ENCODE measurements at regions of chr19 and their contacts with region 1.

Region 1: GRCh38 chr19:51338563-51339312 is 3.2 kb downstream of the VSIG10L start:
- DNase-seq: peak; percentile 74 to 91 (median 86)
- ATAC-seq: peak; percentile 85
- H3K4me3 ChIP-seq: peak overlapping the region; percentile 66 to 71
- H3K4me3 Mint-ChIP-seq: peak overlapping the region; percentile 82
- H3K27ac ChIP-seq: no peak overlapping the region
- H3K27ac Mint-ChIP-seq: no peak overlapping the region
- H3K4me1 ChIP-seq: peaks cover 16% of the 10 kb centered on the region
- H3K4me1 Mint-ChIP-seq: peaks cover 13% of the 10 kb centered on the region
- H3K27me3 ChIP-seq: no peaks in the 10 kb centered on the region
- H3K27me3 Mint-ChIP-seq: peaks cover 4% of the 10 kb centered on the region
- CTCF ChIP-seq: peak; percentile 97

Region 2: DNA sequence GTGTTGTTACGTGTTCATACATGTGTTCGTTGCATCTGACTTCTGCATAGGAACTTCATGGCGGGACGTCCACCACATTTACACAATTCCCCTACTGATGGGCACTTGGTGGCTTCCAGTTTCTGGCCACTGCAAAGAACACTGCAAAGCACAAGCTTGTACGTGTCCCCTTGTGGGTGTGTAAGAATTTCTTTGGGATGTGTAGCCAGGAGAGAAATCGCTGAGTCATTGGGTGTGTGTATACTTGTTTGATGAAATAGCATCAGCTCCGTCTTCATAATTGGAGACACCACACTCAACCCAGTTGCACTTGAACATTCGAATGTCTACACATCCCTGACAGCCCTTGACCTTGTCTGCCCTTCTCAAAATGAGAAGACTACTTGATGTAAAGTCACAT is 405.1 kb before region 1 on chr19:
- CTCF ChIA-PET with region 1: no interaction called
- POLR2A ChIA-PET with region 1: no interaction called
- intact Hi-C with region 1: no loop called
- DNase-seq: no peak
- ATAC-seq: no peak
- H3K4me3 ChIP-seq: no peak overlapping the region
- H3K4me3 Mint-ChIP-seq: no peak overlapping the region
- H3K27ac ChIP-seq: no peak overlapping the region
- H3K27ac Mint-ChIP-seq: no peak overlapping the region
- H3K4me1 ChIP-seq: no peaks in the 10 kb centered on the region
- H3K4me1 Mint-ChIP-seq: peaks cover 2% of the 10 kb centered on the region
- H3K27me3 ChIP-seq: no peaks in the 10 kb centered on the region
- H3K27me3 Mint-ChIP-seq: peaks cover 33% of the 10 kb centered on the region
- CTCF ChIP-seq: no peak

Region 3: GRCh38 chr19:51393959-51394836 is 55.5 kb after region 1 on chr19:
- CTCF ChIA-PET with region 1: interaction called, 4 read pairs
- POLR2A ChIA-PET with region 1: no interaction called
- intact Hi-C with region 1: loop called (anchors 1 kb)
- DNase-seq: peak; percentile 69 to 97 (median 85)
- ATAC-seq: peak; percentile 88
- H3K4me3 ChIP-seq: peak overlapping the region; percentile 45 to 51
- H3K4me3 Mint-ChIP-seq: peak overlapping the region; percentile 84
- H3K27ac ChIP-seq: peak overlapping the region; percentile 31 to 74
- H3K27ac Mint-ChIP-seq: peak overlapping the region; percentile 84
- H3K4me1 ChIP-seq: peaks cover 22% of the 10 kb centered on the region
- H3K4me1 Mint-ChIP-seq: peaks cover 30% of the 10 kb centered on the region
- H3K27me3 ChIP-seq: no peaks in the 10 kb centered on the region
- H3K27me3 Mint-ChIP-seq: no peaks in the 10 kb centered on the region
- CTCF ChIP-seq: no peak

Region 4: GRCh38 chr19:51441410-51442390 is 103.0 kb after region 1 on chr19:
- CTCF ChIA-PET with region 1: interaction called, 14 read pairs
- POLR2A ChIA-PET with region 1: no interaction called
- intact Hi-C with region 1: loop called (anchors 1 kb)
- DNase-seq: peak; percentile 56 to 95 (median 81)
- ATAC-seq: peak; percentile 91
- H3K4me3 ChIP-seq: peak overlapping the region; percentile 21 to 32
- H3K4me3 Mint-ChIP-seq: peak overlapping the region; percentile 75
- H3K27ac ChIP-seq: peak overlapping the region; percentile 24 to 83
- H3K27ac Mint-ChIP-seq: peak overlapping the region; percentile 93
- H3K4me1 ChIP-seq: peaks cover 31% of the 10 kb centered on the region
- H3K4me1 Mint-ChIP-seq: peaks cover 43% of the 10 kb centered on the region
- H3K27me3 ChIP-seq: peaks cover 0 to 2% of the 10 kb centered on the region in 2 experiments
- H3K27me3 Mint-ChIP-seq: peaks cover 7% of the 10 kb centered on the region
- CTCF ChIP-seq: peak; percentile 27

Region 5: DNA sequence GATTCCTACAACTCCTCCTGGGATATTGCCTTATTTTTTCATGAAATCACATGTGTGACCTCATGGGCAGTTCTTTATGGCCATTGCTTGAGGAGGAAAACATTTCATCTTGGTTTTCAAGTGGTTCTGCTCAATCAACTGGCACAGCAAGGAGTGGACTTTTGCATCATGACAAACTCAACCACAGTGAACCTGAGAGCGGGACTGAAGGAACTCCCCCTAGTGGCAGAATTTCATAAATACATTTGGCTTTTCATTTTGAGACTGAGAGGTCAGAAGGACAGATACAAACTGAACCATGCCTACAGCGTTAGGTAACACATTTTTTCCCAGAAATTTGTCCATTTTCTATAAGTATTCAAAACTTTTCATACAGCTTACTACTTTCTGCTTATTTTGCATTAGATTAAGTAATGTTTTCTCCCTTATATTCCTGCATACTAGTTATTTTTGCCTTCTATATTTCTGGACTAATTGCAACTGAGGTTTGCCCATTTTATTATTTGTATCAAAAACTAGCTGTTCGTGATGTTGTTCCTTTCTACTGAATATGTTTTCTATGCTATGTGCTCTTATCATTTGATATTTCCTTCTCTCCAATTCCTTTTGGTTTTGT is 176.2 kb after region 1 on chr19:
- CTCF ChIA-PET with region 1: interaction called, 12 read pairs
- POLR2A ChIA-PET with region 1: no interaction called
- intact Hi-C with region 1: loop called (anchors 1 kb)
- DNase-seq: peak in 5 of 9 experiments; percentile 4 to 68 (median 20)
- ATAC-seq: no peak
- H3K4me3 ChIP-seq: no peak overlapping the region
- H3K4me3 Mint-ChIP-seq: no peak overlapping the region
- H3K27ac ChIP-seq: no peak overlapping the region
- H3K27ac Mint-ChIP-seq: no peak overlapping the region
- H3K4me1 ChIP-seq: no peaks in the 10 kb centered on the region
- H3K4me1 Mint-ChIP-seq: no peaks in the 10 kb centered on the region
- H3K27me3 ChIP-seq: no peaks in the 10 kb centered on the region
- H3K27me3 Mint-ChIP-seq: peaks cover 28% of the 10 kb centered on the region
- CTCF ChIP-seq: peak; percentile 83

Region 6: GRCh38 chr19:51593969-51594773 is 255.4 kb after region 1 on chr19:
- CTCF ChIA-PET with region 1: no interaction called
- POLR2A ChIA-PET with region 1: no interaction called
- intact Hi-C with region 1: loop called in 1 of 2 experiments (anchors 1 kb)
- DNase-seq: peak; percentile 86 to 97 (median 96)
- ATAC-seq: peak; percentile 100
- H3K4me3 ChIP-seq: peak overlapping the region; percentile 69 to 98
- H3K4me3 Mint-ChIP-seq: peak overlapping the region; percentile 99
- H3K27ac ChIP-seq: peak overlapping the region; percentile 50 to 73
- H3K27ac Mint-ChIP-seq: peak overlapping the region; percentile 87
- H3K4me1 ChIP-seq: peaks cover 18% of the 10 kb centered on the region
- H3K4me1 Mint-ChIP-seq: peaks cover 27% of the 10 kb centered on the region
- H3K27me3 ChIP-seq: no peaks in the 10 kb centered on the region
- H3K27me3 Mint-ChIP-seq: peaks cover 10% of the 10 kb centered on the region
- CTCF ChIP-seq: no peak